Endothelial cell of umbilical vein (primary cell): ENCODE measurements at regions of chr5 and their contacts with region 1.

Region 1: GRCh38 chr5:164235300-164235891 is 730.0 kb downstream of the MAT2B start:
- DNase-seq: peak; percentile 88
- H3K4me3 ChIP-seq: no peak overlapping the region
- H3K27ac ChIP-seq: peak overlapping the region; percentile 12
- H3K4me1 ChIP-seq: peaks cover 19% of the 10 kb centered on the region
- H3K27me3 ChIP-seq: no peaks in the 10 kb centered on the region
- CTCF ChIP-seq: no peak
- POLR2A ChIP-seq: no peak

Region 2: DNA sequence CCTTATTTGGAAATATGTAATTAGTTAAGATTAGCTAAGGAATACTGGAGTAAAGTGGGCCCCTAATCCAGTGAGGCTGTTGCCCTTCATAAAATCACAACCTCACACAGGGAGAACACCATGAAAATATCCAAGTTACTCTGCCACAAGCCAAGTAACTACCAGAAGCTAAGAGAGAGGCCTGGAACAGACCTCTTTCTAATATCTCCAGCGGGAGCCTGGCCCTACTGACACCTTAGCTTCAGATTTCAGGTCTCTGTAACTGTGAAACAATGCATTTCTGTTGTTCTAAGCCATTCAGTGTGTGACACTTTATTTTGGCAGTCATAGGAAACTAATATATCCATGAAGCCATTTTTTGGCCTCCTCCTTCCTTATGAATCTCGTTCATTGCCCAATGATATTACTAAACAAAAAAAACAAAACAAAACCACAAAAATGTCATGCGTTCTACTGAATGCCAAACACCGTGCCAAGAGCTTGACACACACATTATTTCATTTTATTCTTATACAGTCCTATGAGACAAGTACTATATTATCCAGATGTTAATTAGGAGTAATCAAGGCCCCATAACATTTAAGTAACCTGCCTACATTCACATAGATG is 31.0 kb before region 1 on chr5:
- CTCF ChIA-PET with region 1: no interaction called
- POLR2A ChIA-PET with region 1: no interaction called
- dilution Hi-C with region 1: no loop called
- intact Hi-C with region 1: loop called (anchors 2 kb)
- DNase-seq: peak; percentile 50
- H3K4me3 ChIP-seq: no peak overlapping the region
- H3K27ac ChIP-seq: peak overlapping the region; percentile 87
- H3K4me1 ChIP-seq: peaks cover 28% of the 10 kb centered on the region
- H3K27me3 ChIP-seq: no peaks in the 10 kb centered on the region
- CTCF ChIP-seq: no peak
- POLR2A ChIP-seq: no peak